ENCODE measurements at regions of chr12 and their contacts with region 1.

Region 1: GRCh38 chr12:131850856-131851559 is 22.8 kb downstream of the MMP17 start:
- DNase-seq: peak; percentile 81 to 84
- ATAC-seq: peak; percentile 85 to 92
- H3K4me3 ChIP-seq: no peak overlapping the region
- H3K27ac ChIP-seq: peak overlapping the region; percentile 73 to 96
- H3K4me1 ChIP-seq: peaks cover 37% of the 10 kb centered on the region
- CTCF ChIP-seq: peak; percentile 92
- EP300 ChIP-seq: no peak
- POLR2A ChIP-seq: no peak
- RAD21 ChIP-seq: peak; percentile 99

Region 2: GRCh38 chr12:131415781-131416180 is 435.2 kb before region 1 on chr12:
- CTCF ChIA-PET with region 1: no interaction called
- POLR2A ChIA-PET with region 1: no interaction called
- DNase-seq: peak; percentile 29 to 56
- ATAC-seq: peak in 1 of 2 experiments; percentile 43; a peak in 3 of 6 replicates
- H3K4me3 ChIP-seq: no peak overlapping the region
- H3K27ac ChIP-seq: no peak overlapping the region
- H3K4me1 ChIP-seq: no peaks in the 10 kb centered on the region
- CTCF ChIP-seq: no peak
- EP300 ChIP-seq: no peak
- POLR2A ChIP-seq: no peak
- RAD21 ChIP-seq: no peak

Region 3: DNA sequence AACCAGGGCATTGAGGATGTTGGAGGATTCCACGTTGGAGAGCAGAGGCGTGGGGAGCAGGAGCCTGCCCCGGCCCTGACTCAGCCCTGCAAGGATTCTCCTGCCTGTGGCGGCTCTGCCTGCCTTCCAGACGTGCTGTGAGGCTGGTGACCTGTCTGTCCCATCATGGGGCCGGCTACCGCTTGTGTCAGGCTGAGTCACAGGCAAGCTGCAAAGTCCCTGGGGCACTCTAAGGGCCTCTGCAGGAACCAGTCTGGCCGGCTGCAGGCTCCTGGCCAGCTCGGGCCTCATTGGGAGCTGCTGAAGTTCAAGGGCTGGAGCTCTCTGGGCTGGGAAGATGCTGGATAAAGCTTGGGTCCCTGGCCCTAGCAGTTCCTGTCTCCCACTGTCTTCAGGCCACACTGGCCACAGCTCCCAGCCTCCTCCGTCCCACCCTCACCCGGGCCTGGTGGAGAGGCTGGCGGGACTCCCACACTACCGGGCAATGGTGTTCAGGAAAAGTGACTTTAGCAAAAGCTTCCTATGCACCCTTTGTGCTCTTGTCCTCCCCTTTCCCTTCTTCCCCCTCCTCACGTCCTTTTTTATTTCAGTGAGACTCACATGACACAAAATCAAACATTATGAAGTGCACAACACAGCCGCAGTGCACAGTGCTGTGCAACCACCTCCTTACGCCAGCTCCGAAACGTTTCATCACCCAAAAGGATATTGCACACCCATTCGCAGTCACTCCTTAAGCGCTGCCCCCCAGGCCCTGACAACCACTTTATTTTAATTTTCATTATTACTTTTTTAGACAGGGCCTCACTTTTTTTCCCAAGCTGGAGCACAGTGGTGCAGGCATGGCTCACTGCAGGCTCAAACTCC is 21.4 kb after region 1 on chr12:
- CTCF ChIA-PET with region 1: interaction called, 15 read pairs
- POLR2A ChIA-PET with region 1: no interaction called
- DNase-seq: peak; percentile 68 to 85
- ATAC-seq: peak; percentile 80 to 91
- H3K4me3 ChIP-seq: no peak overlapping the region
- H3K27ac ChIP-seq: peak overlapping the region; percentile 83 to 96
- H3K4me1 ChIP-seq: peaks cover 30% of the 10 kb centered on the region
- CTCF ChIP-seq: no peak
- EP300 ChIP-seq: peak in 1 of 2 experiments; percentile 22; a peak in 1 of 5 replicates
- POLR2A ChIP-seq: no peak
- RAD21 ChIP-seq: peak in 1 of 2 experiments; percentile 31; a peak in 1 of 5 replicates

Region 4: DNA sequence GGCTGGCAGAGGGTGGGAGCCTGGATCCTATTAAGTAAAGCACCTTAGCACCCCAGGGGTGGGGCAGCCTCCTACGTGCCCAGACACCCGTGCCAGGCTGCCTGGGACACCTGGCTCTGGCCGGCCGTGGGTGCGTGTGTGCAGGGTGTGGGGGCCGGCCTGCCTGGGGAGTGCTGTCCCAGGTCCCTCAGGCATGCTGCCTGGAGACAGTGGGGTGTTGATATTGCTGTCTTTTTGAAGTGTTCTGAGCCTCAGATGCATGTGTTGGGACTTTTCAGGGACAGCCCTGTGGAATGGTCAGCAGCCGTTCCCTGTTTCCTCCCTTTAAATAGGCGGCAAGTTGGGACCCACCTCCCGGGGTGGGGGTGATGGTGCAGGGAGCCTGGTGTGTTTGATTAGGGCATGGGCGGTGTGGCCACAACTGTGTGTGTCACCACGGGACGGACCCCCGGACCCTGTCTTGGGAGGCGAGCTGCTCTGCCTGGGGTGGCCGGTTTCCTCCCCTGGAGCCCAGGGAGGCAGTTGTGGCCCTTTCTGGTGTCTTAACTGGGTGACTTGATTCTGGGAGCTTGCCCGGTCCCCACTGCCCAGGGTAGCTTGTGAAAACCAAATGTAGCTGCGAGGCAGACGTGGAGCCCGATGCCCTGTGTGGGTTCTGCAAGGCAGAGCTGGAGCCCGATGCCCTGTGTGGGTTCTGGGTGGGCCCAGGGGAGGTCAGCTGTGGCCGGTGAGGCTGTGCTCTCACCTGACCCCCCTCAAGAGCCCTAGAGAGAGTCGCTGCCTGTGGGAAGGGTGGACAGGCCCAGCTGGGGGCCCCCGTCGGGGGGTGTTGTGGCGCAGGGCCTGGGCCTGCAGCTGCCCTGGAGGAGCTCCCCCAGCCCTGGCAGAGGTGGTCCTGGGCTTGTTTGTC is 51.6 kb after region 1 on chr12:
- CTCF ChIA-PET with region 1: interaction called, 14 read pairs
- POLR2A ChIA-PET with region 1: no interaction called
- DNase-seq: no peak
- ATAC-seq: peak; percentile 1 to 3; a peak in 4 of 6 replicates
- H3K4me3 ChIP-seq: no peak overlapping the region
- H3K27ac ChIP-seq: peak overlapping the region in 1 of 2 experiments; percentile 68; a peak in 2 of 6 replicates
- H3K4me1 ChIP-seq: peaks cover 48% of the 10 kb centered on the region
- CTCF ChIP-seq: no peak
- EP300 ChIP-seq: no peak
- POLR2A ChIP-seq: no peak
- RAD21 ChIP-seq: no peak

Region 5: GRCh38 chr12:131928080-131928710 is 77.2 kb after region 1 on chr12:
- CTCF ChIA-PET with region 1: interaction called, 24 read pairs
- POLR2A ChIA-PET with region 1: interaction called, 5 read pairs
- DNase-seq: peak in 1 of 2 experiments; percentile 46
- ATAC-seq: peak; percentile 6 to 49; a peak in 5 of 6 replicates
- H3K4me3 ChIP-seq: peak overlapping the region; percentile 78
- H3K27ac ChIP-seq: peak overlapping the region; percentile 98 to 99
- H3K4me1 ChIP-seq: peaks cover 29% of the 10 kb centered on the region
- CTCF ChIP-seq: no peak
- EP300 ChIP-seq: no peak
- POLR2A ChIP-seq: no peak
- RAD21 ChIP-seq: no peak

Region 6: GRCh38 chr12:131959641-131960589 is 108.9 kb after region 1 on chr12:
- CTCF ChIA-PET with region 1: interaction called, 12 read pairs
- POLR2A ChIA-PET with region 1: no interaction called
- DNase-seq: no peak
- ATAC-seq: 0 out of 6 replicates have a peak, but pooled peaks of 1 of the 2 experiments have one; percentile 6
- H3K4me3 ChIP-seq: no peak overlapping the region
- H3K27ac ChIP-seq: no peak overlapping the region
- H3K4me1 ChIP-seq: peaks cover 27% of the 10 kb centered on the region
- CTCF ChIP-seq: no peak
- EP300 ChIP-seq: no peak
- POLR2A ChIP-seq: no peak
- RAD21 ChIP-seq: no peak

Region 7: DNA sequence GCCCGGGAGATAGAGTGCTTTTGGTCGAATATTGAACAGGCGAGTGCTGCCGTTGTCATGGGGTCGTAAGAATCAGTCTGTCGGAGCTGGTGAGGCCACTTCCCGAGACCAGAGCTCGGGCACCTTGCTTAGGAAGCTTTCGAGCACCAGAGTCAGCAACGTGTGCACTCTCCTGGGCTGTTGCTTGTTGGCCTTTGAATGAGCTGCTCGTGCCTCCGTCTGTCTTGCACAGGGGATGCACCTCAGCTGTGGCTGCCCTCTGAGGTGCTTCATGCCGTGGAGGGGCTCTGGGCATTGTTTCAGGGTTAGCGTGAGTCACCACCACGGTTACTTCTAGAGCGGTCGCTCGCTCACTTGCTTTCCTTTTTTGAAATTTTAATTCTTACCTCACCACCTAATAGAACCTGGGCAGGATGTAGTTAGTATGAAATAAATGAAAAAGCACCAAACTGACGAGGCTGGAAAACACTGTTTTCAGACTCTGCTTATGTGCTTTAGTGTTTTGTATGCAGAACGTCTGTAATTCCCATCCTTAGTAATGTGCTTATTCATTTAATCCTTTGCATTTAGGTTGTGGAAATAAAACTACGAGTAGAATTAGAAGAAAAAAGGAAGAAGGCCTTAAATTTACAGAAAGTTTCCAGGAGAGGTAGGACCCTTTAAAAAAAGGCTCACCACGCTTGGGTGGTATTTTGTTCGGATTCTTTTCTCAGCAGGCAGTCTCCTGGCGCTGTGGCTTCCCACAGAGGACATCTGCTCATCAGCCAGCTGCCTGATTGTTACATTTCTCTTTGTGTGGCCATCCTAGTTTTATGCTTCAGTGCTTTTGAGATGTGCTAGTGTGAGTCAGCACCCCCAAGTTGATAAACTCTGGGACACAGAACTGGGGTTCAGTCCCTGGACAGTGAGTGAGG is 139.3 kb after region 1 on chr12:
- CTCF ChIA-PET with region 1: interaction called, 13 read pairs
- POLR2A ChIA-PET with region 1: no interaction called
- DNase-seq: no peak
- ATAC-seq: no peak
- H3K4me3 ChIP-seq: no peak overlapping the region
- H3K27ac ChIP-seq: no peak overlapping the region
- H3K4me1 ChIP-seq: peaks cover 11% of the 10 kb centered on the region
- CTCF ChIP-seq: no peak
- EP300 ChIP-seq: no peak
- POLR2A ChIP-seq: no peak
- RAD21 ChIP-seq: no peak

Measured in A549 (cell line).